Activated naive CD4-positive, alpha-beta T cell treated with anti-CD3 and anti-CD28 coated beads, Interleukin-2, amount 10 ng/mL, durations not matched to agents 7 days and 5 days (primary cell): ENCODE measurements at regions of chr5 and their contacts with region 1.

Region 1: GRCh38 chr5:135426102-135427082 is 20.8 kb downstream of the DCANP1 start:
- DNase-seq: peak; percentile 57
- H3K4me3 Mint-ChIP-seq: no peak overlapping the region
- H3K27ac Mint-ChIP-seq: peak overlapping the region; percentile 90
- H3K4me1 Mint-ChIP-seq: peaks cover 20% of the 10 kb centered on the region
- H3K27me3 Mint-ChIP-seq: peaks cover 25% of the 10 kb centered on the region

Region 2: DNA sequence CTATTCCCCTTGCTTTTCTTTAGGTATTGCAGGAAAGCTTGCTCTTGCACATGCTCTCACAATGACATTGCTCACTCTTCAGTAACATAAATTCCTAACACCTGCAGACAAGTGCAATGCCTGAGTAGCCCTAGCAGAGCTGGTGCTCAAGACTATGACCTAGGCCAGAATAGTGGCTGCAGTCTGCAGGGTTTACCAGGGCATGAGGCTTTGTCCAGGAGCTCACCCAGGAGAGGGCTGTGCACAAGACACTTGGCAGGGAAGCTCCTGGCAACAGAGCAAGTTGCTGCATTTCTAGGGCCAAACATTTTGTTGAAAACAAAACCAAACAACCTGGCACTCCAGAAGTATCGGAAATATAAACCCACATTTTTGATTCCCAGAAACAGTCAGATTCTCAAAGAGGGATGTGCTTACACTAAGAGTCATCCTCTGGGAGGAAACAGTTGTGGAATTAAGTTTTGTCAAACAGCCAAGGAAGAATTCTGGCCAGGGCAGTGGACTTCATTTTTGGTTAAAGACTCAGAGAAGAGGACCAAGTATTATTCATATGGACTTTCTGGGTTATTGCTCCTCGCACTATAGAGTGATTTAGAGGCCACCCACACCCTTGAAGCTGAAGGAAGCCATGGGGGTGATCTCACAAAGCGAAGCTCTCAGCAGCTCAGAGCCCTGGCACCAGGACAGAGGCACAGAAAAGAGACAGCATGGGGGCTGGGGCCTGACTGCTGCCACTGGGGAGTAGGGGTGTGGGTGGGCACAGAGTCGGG is 72.3 kb before region 1 on chr5:
- CTCF ChIA-PET with region 1: interaction called, 20 read pairs
- DNase-seq: no peak
- H3K4me3 Mint-ChIP-seq: no peak overlapping the region
- H3K27ac Mint-ChIP-seq: peak overlapping the region; percentile 39
- H3K4me1 Mint-ChIP-seq: no peaks in the 10 kb centered on the region
- H3K27me3 Mint-ChIP-seq: no peaks in the 10 kb centered on the region

Region 3: DNA sequence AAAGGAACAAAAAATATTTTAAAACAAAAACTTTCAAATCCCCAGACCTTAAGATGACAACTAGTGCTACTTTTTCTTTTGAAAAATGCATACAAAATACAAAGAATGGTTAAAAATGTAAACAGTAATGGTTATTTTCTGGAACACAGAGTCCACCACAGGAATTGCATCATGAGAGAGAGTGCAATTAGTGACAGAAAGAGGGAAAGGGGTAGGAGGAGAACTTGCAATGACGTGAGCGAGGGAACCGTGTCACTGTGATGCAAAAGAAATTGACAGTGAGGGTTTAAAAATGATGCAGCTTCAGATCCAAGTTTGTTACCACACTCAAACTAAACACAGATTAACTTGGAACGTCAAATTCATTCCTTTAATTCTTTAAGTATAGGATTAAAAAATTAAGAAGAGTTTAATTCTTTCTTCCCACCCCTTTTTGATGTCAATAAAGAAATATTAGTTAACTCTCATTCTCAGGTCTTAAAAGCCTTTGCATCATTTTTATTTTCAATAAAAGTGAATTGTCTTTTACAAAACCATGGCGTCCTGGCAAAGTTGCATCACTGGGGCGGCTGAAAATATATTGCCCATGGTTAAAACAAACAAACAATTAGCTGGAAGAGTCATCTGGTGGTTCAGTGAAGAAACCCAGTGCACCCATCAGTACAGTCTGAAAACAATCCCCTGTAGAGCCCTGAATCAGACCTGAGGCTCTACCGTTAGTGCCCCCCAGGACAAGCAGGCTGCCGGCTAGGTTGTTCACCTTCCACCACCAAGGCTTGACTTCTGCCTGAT is 66.8 kb before region 1 on chr5:
- CTCF ChIA-PET with region 1: interaction called, 10 read pairs
- DNase-seq: no peak
- H3K4me3 Mint-ChIP-seq: no peak overlapping the region
- H3K27ac Mint-ChIP-seq: peak overlapping the region; percentile 55
- H3K4me1 Mint-ChIP-seq: peaks cover 29% of the 10 kb centered on the region
- H3K27me3 Mint-ChIP-seq: no peaks in the 10 kb centered on the region

Region 4: DNA sequence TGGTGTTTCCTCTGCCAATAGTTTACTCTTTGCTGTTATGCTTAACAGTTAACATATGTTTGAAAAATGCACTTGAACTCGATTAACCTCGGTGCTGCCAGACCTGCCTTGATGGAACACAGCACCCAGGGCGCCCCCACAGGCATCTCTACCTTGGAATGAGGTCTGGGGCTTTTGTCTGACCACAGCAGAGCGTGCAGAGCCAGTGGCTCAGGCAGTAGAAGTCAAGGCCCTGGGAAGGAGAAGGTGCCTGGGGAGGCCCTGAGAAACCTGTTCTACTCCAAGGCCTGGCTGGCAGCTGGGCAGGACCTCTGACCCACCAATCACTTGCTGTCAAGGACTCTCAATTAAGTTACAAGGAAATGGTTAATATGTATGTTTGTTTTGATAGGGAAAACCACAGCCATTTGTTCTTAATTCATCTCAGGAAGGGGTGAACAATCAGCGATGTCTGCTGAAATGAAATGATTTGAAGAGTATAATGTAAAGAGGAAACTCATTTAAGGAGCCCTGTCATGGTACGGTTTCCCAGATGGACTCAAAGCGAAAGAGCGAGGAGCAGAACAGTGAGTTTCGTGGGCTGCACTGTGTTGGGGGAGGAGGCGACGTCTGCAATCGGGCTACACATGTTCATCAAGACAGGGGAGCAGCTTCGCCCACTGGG is 49.3 kb before region 1 on chr5:
- CTCF ChIA-PET with region 1: interaction called, 13 read pairs
- DNase-seq: no peak
- H3K4me3 Mint-ChIP-seq: no peak overlapping the region
- H3K27ac Mint-ChIP-seq: peak overlapping the region; percentile 6
- H3K4me1 Mint-ChIP-seq: peaks cover 82% of the 10 kb centered on the region
- H3K27me3 Mint-ChIP-seq: no peaks in the 10 kb centered on the region

Region 5: GRCh38 chr5:135810188-135810943 is 384.0 kb after region 1 on chr5:
- CTCF ChIA-PET with region 1: no interaction called
- DNase-seq: no peak
- H3K4me3 Mint-ChIP-seq: no peak overlapping the region
- H3K27ac Mint-ChIP-seq: no peak overlapping the region
- H3K4me1 Mint-ChIP-seq: no peaks in the 10 kb centered on the region
- H3K27me3 Mint-ChIP-seq: no peaks in the 10 kb centered on the region